ENCODE measurements at regions of chr7 and their contacts with region 1.

Region 1: GRCh38 chr7:71615017-71615416 is 483.1 kb downstream of the GALNT17 start:
- DNase-seq: peak; percentile 75 to 81
- ATAC-seq: peak; percentile 77
- H3K4me3 ChIP-seq: no peak overlapping the region
- H3K27ac ChIP-seq: peak overlapping the region in 1 of 2 donors; percentile 86
- H3K4me1 ChIP-seq: peaks cover 4% of the 10 kb centered on the region in 2 donors
- H3K27me3 ChIP-seq: no peaks in the 10 kb centered on the region

Region 2: DNA sequence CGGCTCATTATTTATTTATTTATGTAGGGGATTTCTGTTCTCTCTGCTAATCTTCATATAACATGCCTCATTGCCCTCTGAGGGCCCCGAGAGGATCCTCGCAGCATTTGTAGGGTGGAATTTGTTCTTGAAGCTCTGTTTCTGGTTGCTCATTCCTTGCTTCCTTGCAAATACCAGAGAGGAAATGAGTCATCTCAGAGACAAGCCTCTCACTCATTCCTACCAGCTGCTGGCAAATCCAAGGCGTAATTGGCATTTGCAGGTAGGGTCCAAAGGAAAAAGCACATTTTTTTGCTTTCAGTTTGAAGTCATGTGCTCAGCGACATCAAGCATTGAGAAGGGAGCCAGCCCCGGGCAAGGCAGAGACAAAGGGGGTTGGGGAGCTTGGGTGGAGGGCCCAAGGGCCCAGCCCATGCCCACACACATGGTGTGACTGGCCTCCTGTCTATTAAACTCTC is 18.6 kb after region 1 on chr7:
- intact Hi-C with region 1: loop called in 1 of 2 experiments (anchors 1 kb)
- DNase-seq: peak in 1 of 2 donors; percentile 52
- ATAC-seq: no peak
- H3K4me3 ChIP-seq: no peak overlapping the region
- H3K27ac ChIP-seq: peak overlapping the region in 1 of 2 donors; percentile 46
- H3K4me1 ChIP-seq: peaks cover 0 to 1% of the 10 kb centered on the region in 2 donors
- H3K27me3 ChIP-seq: no peaks in the 10 kb centered on the region

Region 3: GRCh38 chr7:72152161-72153131 is 537.4 kb after region 1 on chr7:
- intact Hi-C with region 1: no loop called
- DNase-seq: no peak
- ATAC-seq: no peak
- H3K4me3 ChIP-seq: no peak overlapping the region
- H3K27ac ChIP-seq: no peak overlapping the region
- H3K4me1 ChIP-seq: no peaks in the 10 kb centered on the region
- H3K27me3 ChIP-seq: no peaks in the 10 kb centered on the region